IMR-90 (cell line): ENCODE measurements at regions of chr5 and their contacts with region 1.

Region 1: GRCh38 chr5:154038707-154039457 is at the starts of genes FAM114A2 and MFAP3:
- DNase-seq: peak; percentile 82
- ATAC-seq: peak; percentile 98
- H3K4me3 ChIP-seq: peak within 1 kb of the TSS; percentile 59
- H3K27ac ChIP-seq: peak within 1 kb of the TSS; percentile 64
- H3K4me1 ChIP-seq: no peaks in the 10 kb centered on the region
- H3K27me3 ChIP-seq: no peaks in the 10 kb centered on the region
- CTCF ChIP-seq: no peak
- POLR2A ChIP-seq: peak; percentile 85
- RAD21 ChIP-seq: no peak
- total RNA-seq, gene FAM114A2: 36.4 and 41.2 TPM in 2 replicates
- total RNA-seq, gene MFAP3: 67.0 and 80.5 TPM in 2 replicates

Region 2: DNA sequence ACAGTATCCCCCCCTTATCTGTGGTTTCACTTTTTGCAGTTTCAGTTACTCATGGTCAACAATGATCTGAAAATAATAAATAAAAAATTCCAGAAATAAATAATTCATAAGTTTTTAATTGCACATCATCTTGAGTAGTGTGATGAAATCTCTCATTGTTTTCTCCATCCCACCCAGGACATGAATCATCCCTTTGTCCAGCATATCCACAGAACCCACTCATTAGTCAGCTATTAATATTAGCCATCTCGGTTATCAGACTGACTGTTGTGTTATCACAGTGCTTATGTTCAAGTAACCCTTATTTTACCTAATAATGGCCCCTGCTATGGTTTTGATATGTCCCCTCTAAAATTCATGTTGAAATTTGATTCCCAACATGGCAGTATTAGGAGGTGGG is 40.9 kb before region 1 on chr5:
- CTCF ChIA-PET with region 1: no interaction called
- POLR2A ChIA-PET with region 1: no interaction called
- dilution Hi-C with region 1: no loop called
- in situ Hi-C with region 1: no loop called
- intact Hi-C with region 1: loop called (anchors 5 kb)
- DNase-seq: no peak
- ATAC-seq: no peak
- H3K4me3 ChIP-seq: no peak overlapping the region
- H3K27ac ChIP-seq: no peak overlapping the region
- H3K4me1 ChIP-seq: no peaks in the 10 kb centered on the region
- H3K27me3 ChIP-seq: no peaks in the 10 kb centered on the region
- CTCF ChIP-seq: no peak
- POLR2A ChIP-seq: no peak
- RAD21 ChIP-seq: no peak